ENCODE measurements at regions of chr5 and their contacts with region 1.

Region 1: GRCh38 chr5:147949711-147950573 is 43.6 kb upstream of the C5orf46 start:
- DNase-seq: no peak
- H3K4me3 ChIP-seq: no peak overlapping the region
- H3K27ac ChIP-seq: no peak overlapping the region
- H3K4me1 ChIP-seq: peaks cover 0 to 7% (median 0%) of the 10 kb centered on the region in 4 donors
- H3K27me3 ChIP-seq: no peaks in the 10 kb centered on the region
- CTCF ChIP-seq: peak; percentile 34 to 64 (median 50)
- EP300 ChIP-seq: no peak
- POLR2A ChIP-seq: no peak

Region 2: DNA sequence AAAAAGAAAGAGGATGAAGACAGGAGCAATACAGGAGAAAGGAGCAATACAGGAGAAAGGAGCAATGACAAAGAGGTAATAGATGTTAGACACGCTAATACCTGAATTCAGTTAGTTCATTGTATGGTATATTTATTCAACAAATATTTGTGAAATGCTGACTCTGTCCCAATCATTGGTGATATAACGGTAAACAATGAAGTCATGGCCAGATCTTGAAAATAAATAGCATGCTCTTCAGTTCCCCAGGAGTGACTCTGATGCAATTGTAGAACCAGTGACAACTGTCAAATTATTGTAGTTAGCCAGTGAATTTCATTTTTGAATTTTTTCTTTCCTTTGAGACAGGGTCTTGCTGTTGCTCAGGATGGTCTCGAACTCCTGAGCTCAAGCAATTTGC is 170.4 kb after region 1 on chr5:
- intact Hi-C with region 1: loop called (anchors 2 kb)
- DNase-seq: no peak
- H3K4me3 ChIP-seq: no peak overlapping the region
- H3K27ac ChIP-seq: no peak overlapping the region
- H3K4me1 ChIP-seq: no peaks in the 10 kb centered on the region
- H3K27me3 ChIP-seq: no peaks in the 10 kb centered on the region
- CTCF ChIP-seq: no peak
- EP300 ChIP-seq: no peak
- POLR2A ChIP-seq: no peak